ENCODE measurements at regions of chr14 and their contacts with region 1.

Region 1: DNA sequence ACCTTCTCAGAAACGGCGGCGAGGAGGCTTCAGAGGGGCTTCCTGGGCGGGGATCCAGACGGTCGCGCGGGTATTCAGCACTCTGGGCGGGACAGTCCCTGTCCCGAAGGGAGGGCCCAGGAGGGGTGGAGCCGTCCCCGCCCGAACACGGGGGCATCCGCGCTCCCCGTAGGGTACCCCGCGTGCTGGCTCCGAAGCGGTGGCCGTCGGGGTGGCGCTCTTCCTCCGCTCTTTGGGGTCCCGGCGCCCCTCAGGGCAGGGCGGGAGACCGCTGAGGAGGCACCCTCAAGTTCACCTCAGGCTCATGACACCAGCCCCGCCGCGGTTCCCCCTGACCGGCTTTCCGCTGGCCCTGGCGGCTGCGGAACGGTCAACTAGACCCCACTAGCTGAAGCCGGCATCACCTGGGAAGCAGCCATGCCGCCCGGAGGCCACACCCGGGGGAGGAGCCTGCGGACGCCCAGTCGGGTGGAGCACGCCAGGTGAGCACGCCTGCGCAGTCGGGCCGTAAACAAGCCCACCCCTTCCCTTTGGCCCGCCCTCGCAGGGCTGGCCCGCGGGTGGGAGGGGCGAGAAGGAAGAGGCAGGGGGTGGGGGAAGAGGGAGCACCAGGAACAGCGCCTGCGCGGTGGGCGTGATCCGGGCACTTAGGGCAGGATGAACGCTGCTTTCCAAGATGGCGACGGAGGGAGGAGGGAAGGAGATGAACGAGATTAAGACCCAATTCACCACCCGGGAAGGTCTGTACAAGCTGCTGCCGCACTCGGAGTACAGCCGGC is at the start of gene WDR20:
- DNase-seq: peak; percentile 93
- ATAC-seq: peak; percentile 95
- H3K4me3 ChIP-seq: peak within 1 kb of the TSS; percentile 100
- H3K27ac ChIP-seq: peak within 1 kb of the TSS; percentile 86
- H3K4me1 ChIP-seq: peaks cover 6% of the 10 kb centered on the region; the same call in 1 of the 2 replicates
- H3K27me3 ChIP-seq: no peaks in the 10 kb centered on the region
- CTCF ChIP-seq: 0 out of 6 replicates have a peak, but pooled peaks of 1 of the 3 experiments have one; percentile 14
- EP300 ChIP-seq: no peak
- POLR2A ChIP-seq: peak; percentile 84
- RAD21 ChIP-seq: no peak
- polyA plus RNA-seq, gene WDR20: 9.1 to 13.7 TPM

Region 2: DNA sequence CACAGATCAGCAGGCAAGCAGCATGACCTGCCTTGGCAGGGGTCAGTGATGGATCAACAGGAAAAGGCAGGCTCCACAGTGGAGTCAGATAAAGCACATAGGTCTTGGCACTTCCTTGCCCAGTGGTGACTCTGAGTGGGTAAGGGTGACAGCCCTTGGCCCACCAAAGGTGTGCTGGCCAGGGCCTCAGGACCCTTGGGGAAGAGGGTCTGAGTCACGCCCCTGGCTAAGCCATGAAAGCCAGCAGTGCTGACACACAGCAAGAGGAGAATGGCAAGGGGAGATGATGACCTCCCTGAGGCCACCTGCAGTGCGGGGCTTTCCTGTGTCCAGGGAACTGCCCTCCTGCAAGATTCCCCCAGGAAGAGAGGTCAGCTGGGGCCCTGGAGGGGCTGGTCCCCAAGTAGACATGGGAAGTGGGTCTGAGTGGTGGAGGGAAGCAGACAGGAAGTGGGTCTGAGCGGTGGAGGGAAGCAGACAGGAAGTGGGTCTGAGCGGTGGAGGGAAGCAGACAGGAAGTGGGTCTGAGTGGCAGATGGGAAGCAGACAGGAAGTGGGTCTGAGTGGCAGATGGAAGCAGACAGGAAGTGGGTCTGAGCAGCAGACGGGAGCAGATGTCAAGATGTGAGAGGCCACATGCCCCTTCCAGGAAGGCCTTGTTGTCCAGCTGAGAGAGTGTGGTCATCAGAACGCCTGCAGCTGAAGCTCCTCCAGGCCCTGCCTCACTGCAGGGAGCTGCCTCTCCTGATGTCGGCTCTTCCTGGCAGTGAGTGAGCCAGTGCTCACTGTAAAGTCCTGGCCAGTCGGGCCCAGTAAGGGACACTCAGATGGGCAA is 543.3 kb before region 1 on chr14:
- CTCF ChIA-PET with region 1: no interaction called
- POLR2A ChIA-PET with region 1: no interaction called
- RAD21 ChIA-PET with region 1: no interaction called
- SMC1A ChIA-PET with region 1: no interaction called
- in situ Hi-C with region 1: no loop called
- intact Hi-C with region 1: no loop called
- DNase-seq: no peak
- ATAC-seq: no peak
- H3K4me3 ChIP-seq: no peak overlapping the region
- H3K27ac ChIP-seq: no peak overlapping the region
- H3K4me1 ChIP-seq: no peaks in the 10 kb centered on the region
- H3K27me3 ChIP-seq: no peaks in the 10 kb centered on the region
- CTCF ChIP-seq: no peak
- EP300 ChIP-seq: no peak
- POLR2A ChIP-seq: no peak
- RAD21 ChIP-seq: no peak

Region 3: GRCh38 chr14:102063091-102063802 is 76.2 kb before region 1 on chr14:
- CTCF ChIA-PET with region 1: no interaction called
- POLR2A ChIA-PET with region 1: no interaction called
- RAD21 ChIA-PET with region 1: no interaction called
- SMC1A ChIA-PET with region 1: no interaction called
- in situ Hi-C with region 1: no loop called
- intact Hi-C with region 1: no loop called
- DNase-seq: peak; percentile 31
- ATAC-seq: peak; percentile 98
- H3K4me3 ChIP-seq: no peak overlapping the region
- H3K27ac ChIP-seq: no peak overlapping the region
- H3K4me1 ChIP-seq: no peaks in the 10 kb centered on the region
- H3K27me3 ChIP-seq: no peaks in the 10 kb centered on the region
- CTCF ChIP-seq: peak; percentile 28 to 48 (median 37); a peak in 4 of 6 replicates
- EP300 ChIP-seq: no peak
- POLR2A ChIP-seq: no peak
- RAD21 ChIP-seq: peak; percentile 45

Region 4: GRCh38 chr14:102086972-102087761 is 52.3 kb before region 1 on chr14 and contains the start of gene HSP90AA1:
- CTCF ChIA-PET with region 1: interaction called, 3 read pairs
- POLR2A ChIA-PET with region 1: interaction called, 6 read pairs
- RAD21 ChIA-PET with region 1: interaction called, 3 read pairs
- SMC1A ChIA-PET with region 1: no interaction called
- in situ Hi-C with region 1: no loop called
- intact Hi-C with region 1: loop called (anchors 1 kb)
- DNase-seq: peak; percentile 60
- ATAC-seq: peak; percentile 70
- H3K4me3 ChIP-seq: peak within 1 kb of the TSS; percentile 98
- H3K27ac ChIP-seq: peak within 1 kb of the TSS; percentile 95
- H3K4me1 ChIP-seq: peaks cover 9% of the 10 kb centered on the region
- H3K27me3 ChIP-seq: no peaks in the 10 kb centered on the region
- CTCF ChIP-seq: 0 out of 6 replicates have a peak, but pooled peaks of 1 of the 3 experiments have one; percentile 15
- EP300 ChIP-seq: peak in 1 of 2 experiments; percentile 97; a peak in 1 of 4 replicates
- POLR2A ChIP-seq: peak; percentile 96
- RAD21 ChIP-seq: no peak
- polyA plus RNA-seq, gene HSP90AA1: 555 to 817 TPM

Region 5: DNA sequence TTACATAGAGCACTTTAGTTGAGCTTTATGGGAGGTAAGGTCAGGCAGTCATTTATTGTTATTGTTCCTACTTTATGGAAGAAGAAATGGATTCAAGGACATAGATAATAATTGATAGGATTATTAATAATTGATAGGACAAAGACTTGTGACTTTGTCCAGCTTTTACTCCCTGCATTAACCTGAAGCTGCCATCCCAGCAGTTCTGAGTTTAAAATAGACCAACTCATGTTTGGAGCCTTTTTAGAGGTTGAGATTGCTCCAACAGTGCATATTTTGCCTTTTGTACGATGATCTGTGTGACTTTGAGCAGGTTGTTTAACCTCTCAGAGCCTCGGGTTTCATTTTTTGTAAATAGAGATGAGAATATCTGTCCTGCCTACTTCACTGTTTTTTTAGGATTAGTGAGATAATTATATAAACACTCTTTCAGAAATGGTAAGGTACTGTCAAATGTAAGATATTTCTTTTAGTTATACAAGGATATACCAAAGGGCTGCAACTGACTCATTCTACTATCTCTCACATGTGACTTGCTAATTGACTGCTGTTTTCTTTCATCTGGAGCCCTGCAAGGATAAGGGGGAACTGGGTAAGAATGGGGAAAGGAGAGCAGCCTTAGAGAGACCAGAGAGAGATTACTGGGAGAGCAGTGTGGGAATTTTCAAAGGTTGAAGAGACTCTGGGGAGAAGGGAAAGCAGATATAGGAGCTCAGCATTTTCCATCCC is 15.5 kb after region 1 on chr14:
- CTCF ChIA-PET with region 1: interaction called, 3 read pairs
- POLR2A ChIA-PET with region 1: interaction called, 4 read pairs
- RAD21 ChIA-PET with region 1: no interaction called
- SMC1A ChIA-PET with region 1: interaction called, 5 read pairs
- in situ Hi-C with region 1: no loop called
- intact Hi-C with region 1: loop called (anchors 2 kb)
- DNase-seq: no peak
- ATAC-seq: peak; percentile 52
- H3K4me3 ChIP-seq: no peak overlapping the region
- H3K27ac ChIP-seq: no peak overlapping the region
- H3K4me1 ChIP-seq: no peaks in the 10 kb centered on the region
- H3K27me3 ChIP-seq: no peaks in the 10 kb centered on the region
- CTCF ChIP-seq: no peak
- EP300 ChIP-seq: no peak
- POLR2A ChIP-seq: no peak
- RAD21 ChIP-seq: no peak

Region 6: GRCh38 chr14:102255401-102256190 is 116.2 kb after region 1 on chr14:
- CTCF ChIA-PET with region 1: no interaction called
- POLR2A ChIA-PET with region 1: no interaction called
- RAD21 ChIA-PET with region 1: no interaction called
- SMC1A ChIA-PET with region 1: no interaction called
- in situ Hi-C with region 1: no loop called
- intact Hi-C with region 1: no loop called
- DNase-seq: no peak
- ATAC-seq: no peak
- H3K4me3 ChIP-seq: no peak overlapping the region
- H3K27ac ChIP-seq: no peak overlapping the region
- H3K4me1 ChIP-seq: no peaks in the 10 kb centered on the region
- H3K27me3 ChIP-seq: no peaks in the 10 kb centered on the region
- CTCF ChIP-seq: no peak
- EP300 ChIP-seq: no peak
- POLR2A ChIP-seq: no peak
- RAD21 ChIP-seq: no peak

Measured in GM12878 (cell line).